ENCODE measurements at regions of chr17 and their contacts with region 1.

Region 1: GRCh38 chr17:3647769-3648555 is 11.4 kb downstream of the CTNS start:
- DNase-seq: peak; percentile 65
- H3K4me3 Mint-ChIP-seq: no peak overlapping the region
- H3K27ac Mint-ChIP-seq: no peak overlapping the region
- H3K4me1 Mint-ChIP-seq: peaks cover 20% of the 10 kb centered on the region
- H3K27me3 Mint-ChIP-seq: no peaks in the 10 kb centered on the region

Region 2: GRCh38 chr17:3602499-3602898 is 45.5 kb before region 1 on chr17:
- CTCF ChIA-PET with region 1: interaction called, 41 read pairs
- POLR2A ChIA-PET with region 1: interaction called, 3 read pairs
- DNase-seq: peak; percentile 36
- H3K4me3 Mint-ChIP-seq: no peak overlapping the region
- H3K27ac Mint-ChIP-seq: no peak overlapping the region
- H3K4me1 Mint-ChIP-seq: peaks cover 2% of the 10 kb centered on the region
- H3K27me3 Mint-ChIP-seq: no peaks in the 10 kb centered on the region